ENCODE measurements at regions of chr1 and their contacts with region 1.

Region 1: DNA sequence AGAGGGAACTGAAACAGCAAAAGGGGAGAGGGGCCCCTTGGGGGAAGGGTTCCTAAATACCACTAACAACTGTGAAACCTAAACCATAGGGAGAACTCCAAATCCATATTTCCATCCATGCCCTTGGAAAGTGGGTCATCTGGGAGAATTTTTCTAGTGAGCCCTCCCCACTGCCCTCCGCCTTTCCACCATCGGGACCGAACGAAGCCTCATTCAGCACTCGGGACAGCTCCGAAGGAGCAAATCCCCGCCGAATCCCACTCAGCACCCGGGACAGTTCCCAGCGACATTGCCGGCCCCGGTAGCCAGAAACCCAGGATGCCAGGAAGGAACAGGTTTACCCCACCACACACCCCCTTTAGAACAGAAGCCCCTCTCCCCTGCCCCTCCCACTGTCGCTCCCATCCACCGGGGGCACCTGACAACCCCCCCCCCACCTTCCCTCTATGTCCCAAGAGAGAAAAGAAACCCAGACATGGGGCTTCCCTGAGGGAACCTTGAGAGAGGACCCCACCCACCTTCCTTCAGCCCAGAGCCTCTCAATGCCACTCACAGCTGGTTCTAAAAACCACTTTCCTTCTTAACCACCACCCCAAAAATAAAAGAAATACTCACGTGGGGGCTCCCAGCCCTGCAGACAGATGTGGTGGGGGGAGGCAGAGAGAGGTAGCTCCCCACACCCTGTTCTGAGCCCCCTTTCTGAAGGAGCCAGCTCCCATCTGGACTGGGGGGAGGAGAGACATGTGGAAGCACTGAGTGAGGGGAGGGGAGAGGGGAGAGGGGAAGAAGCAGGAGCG is 4.5 kb downstream of the DLGAP3 start:
- DNase-seq: peak; percentile 33
- H3K4me3 ChIP-seq: no peak overlapping the region
- CTCF ChIP-seq: no peak

Region 2: DNA sequence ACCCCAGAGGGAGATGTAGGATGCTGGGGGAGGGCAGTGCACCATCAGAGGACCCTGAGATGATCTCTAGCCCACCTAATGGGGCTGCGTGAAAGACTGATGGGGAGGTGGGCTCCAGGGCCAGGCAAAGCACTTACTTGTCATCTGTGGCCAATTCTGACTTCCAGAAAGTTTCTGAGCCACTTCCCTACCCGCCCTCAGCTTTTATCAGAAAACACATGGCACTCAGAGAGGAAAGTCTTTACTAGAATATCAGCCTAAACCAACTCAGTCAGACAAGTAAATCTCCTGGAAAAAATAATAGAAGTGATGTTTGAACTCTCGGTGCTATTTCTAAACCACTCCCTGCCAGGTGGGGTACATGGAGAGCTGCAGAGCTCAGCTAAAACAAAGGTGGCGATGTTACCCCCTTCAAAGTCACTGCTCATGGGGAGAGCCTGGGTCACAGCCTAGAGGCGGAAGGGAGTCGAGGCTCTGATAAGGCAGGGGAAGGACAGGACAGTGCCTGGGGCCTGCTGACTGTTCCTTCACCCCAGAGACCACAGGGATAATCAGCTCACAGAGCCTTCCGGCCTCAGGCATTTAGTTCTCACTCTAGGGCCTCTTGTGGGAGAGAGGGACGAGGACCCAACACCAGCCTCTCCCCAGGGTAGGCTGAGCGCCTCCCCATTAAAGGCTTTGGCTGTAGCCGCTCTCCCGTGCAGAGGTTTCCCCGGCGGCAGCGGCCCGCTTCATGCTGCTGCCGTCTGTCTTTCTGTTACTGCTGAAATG is 79.6 kb before region 1 on chr1:
- in situ Hi-C with region 1: loop called (anchors 5 kb)
- DNase-seq: no peak
- H3K4me3 ChIP-seq: no peak overlapping the region
- CTCF ChIP-seq: no peak

Region 3: GRCh38 chr1:34950428-34950827 is 25.5 kb after region 1 on chr1:
- in situ Hi-C with region 1: no loop called
- DNase-seq: no peak
- H3K4me3 ChIP-seq: no peak overlapping the region
- CTCF ChIP-seq: no peak

Measured in astrocyte of the cerebellum (primary cell).